Vagina (tissue), 2 donors: ENCODE measurements at regions of chr6 and their contacts with region 1.

Region 1: GRCh38 chr6:109059571-109060021 is 35.0 kb downstream of the SESN1 start:
- DNase-seq: no peak
- H3K4me3 ChIP-seq: no peak overlapping the region
- H3K27ac ChIP-seq: no peak overlapping the region
- H3K4me1 ChIP-seq: peaks cover 33% of the 10 kb centered on the region
- H3K27me3 ChIP-seq: no peaks in the 10 kb centered on the region
- CTCF ChIP-seq: peak in 1 of 3 experiments; percentile 8
- POLR2A ChIP-seq: no peak

Region 2: DNA sequence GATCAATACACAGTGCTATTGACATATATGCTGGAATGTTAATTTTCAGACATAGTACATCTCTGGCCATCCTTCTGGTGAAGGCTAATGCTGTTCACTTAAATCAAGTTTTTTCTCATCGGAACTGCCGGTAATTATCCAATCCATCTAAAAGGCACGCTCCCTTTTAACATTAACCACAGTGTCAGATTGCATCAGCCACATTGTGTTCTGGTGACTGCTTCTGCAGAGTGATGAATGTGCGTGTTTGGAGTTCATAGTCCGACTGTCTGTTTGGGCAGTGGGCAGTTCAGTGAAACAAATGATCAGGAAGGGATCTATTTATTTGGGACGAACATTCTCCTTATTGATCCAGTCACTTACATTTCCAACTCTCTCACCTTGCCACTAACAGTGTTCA is 1520.2 kb before region 1 on chr6:
- intact Hi-C with region 1: no loop called
- DNase-seq: no peak
- H3K4me3 ChIP-seq: no peak overlapping the region
- H3K27ac ChIP-seq: no peak overlapping the region
- H3K4me1 ChIP-seq: no peaks in the 10 kb centered on the region
- H3K27me3 ChIP-seq: no peaks in the 10 kb centered on the region
- CTCF ChIP-seq: no peak
- POLR2A ChIP-seq: no peak

Region 3: GRCh38 chr6:107657755-107658461 is 1401.7 kb before region 1 on chr6:
- intact Hi-C with region 1: loop called (anchors 10 kb)
- DNase-seq: no peak
- H3K4me3 ChIP-seq: peak overlapping the region in 1 of 2 donors; percentile 19
- H3K27ac ChIP-seq: peak overlapping the region; percentile 31
- H3K4me1 ChIP-seq: peaks cover 15% of the 10 kb centered on the region
- H3K27me3 ChIP-seq: no peaks in the 10 kb centered on the region
- CTCF ChIP-seq: peak in 1 of 3 experiments; percentile 35
- POLR2A ChIP-seq: no peak